ENCODE measurements at regions of chr5 and their contacts with region 1.

Region 1: DNA sequence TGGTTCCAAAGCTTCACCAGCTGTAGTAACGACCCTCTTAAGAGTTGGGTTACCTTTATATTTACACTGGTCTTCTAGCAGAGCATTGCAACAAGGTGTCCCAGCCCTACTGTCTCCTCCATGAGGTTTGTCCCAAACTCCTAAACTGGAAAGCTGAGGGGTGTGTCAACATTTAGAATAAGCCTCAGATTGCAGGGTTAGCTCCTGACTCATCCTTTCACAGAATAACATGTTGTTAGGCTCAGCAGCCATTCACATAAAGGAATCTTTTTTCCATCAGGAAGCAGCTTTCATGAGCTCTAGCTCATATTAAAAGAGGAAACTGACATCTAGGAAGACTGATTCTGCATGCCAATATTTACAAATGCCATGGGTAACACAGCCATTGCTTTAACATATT is 238.7 kb downstream of the EFNA5 start:
- DNase-seq: no peak
- ATAC-seq: no peak

Region 2: GRCh38 chr5:107329850-107330249 is 102.1 kb before region 1 on chr5:
- intact Hi-C with region 1: no loop called
- DNase-seq: no peak
- ATAC-seq: no peak

Region 3: DNA sequence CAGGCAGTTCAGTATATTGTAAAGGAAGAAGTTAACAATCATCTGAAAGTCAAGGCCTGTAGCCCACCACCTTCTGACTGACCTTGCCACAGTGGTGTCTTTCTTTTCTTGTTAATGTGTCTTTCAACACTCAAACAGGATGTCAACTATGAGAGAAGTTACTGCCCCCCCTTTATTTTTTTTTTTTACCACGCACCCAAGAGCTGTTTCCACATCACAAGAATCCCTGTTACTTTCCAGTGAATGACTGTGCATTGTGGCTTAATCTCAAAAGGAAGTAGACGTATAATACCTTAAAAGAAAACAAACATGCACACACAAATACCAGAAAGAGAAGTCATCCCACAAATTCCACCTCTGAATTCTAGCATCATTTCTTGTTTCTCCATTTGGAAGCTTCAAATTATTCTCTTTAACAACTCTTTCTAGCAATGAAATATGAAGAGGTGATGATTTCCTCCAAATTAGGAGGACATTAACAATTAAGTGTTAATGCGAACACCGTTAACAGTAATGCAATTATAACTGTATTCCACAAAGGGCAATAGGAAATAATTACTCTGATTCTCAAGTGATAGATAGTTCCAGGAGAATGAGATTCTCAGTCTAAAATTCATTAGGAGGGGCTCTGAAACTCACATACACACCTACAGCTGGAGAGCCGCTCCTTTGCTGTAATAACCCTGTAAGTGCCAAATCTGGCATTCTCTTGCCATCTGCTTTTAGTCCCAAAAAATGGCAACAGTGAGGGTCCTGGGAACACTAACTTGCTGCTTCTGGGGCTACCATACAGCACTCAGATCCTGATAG is 37.7 kb after region 1 on chr5:
- intact Hi-C with region 1: loop called (anchors 5 kb)
- DNase-seq: no peak
- ATAC-seq: no peak

Measured in Right ventricle myocardium inferior (tissue), 1 donor.